AG04450 (cell line): ENCODE measurements at regions of chr6 and their contacts with region 1.

Region 1: GRCh38 chr6:89819336-89820130 is at the start of gene MDN1:
- DNase-seq: peak; percentile 82
- H3K4me3 ChIP-seq: peak within 1 kb of the TSS; percentile 98
- H3K27ac ChIP-seq: peak within 1 kb of the TSS; percentile 81
- H3K27me3 ChIP-seq: no peaks in the 10 kb centered on the region
- CTCF ChIP-seq: no peak
- polyA plus RNA-seq, gene MDN1: 14.6 and 15.8 TPM in 2 replicates

Region 2: DNA sequence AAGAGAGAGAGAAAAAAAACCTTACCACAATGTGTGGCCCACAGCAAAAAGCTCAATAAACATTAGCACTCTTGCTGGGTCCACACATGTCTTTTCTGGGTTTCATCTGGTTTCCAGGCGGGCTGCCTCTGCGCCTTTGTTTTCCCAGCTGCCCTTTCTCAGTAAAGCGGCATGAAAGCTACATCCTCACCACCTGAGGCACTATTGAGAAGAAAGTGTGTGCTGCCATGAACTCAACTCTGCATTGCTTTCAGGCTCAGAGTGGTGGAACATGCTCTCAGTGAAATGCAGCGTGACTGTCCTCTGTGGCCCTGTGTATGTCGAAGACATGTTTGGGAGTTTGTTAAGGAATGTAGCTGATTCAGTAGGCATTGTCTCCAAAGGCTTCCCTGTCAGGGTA is 283.3 kb before region 1 on chr6:
- CTCF ChIA-PET with region 1: no interaction called
- POLR2A ChIA-PET with region 1: no interaction called
- DNase-seq: no peak
- H3K4me3 ChIP-seq: no peak overlapping the region
- H3K27ac ChIP-seq: no peak overlapping the region
- H3K27me3 ChIP-seq: no peaks in the 10 kb centered on the region
- CTCF ChIP-seq: no peak

Region 3: DNA sequence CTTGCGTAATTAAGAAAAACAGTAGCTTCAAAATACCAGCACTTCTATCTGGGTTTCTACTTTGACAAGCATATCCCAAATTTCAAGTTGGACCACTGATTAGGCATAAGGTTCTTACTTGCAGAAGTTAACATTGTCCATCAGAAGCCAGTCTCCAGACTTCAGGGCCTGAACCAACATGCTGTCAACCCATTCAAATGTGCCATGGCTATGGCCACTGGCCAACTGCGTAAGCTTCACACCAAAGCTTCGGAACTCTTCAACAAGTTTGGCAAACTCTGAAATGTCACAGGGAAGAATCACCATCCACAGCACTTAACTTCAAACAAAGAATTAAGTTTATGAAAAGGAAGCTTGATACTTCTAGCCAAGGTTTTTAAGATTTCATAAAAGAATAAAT is 103.0 kb before region 1 on chr6:
- CTCF ChIA-PET with region 1: no interaction called
- POLR2A ChIA-PET with region 1: no interaction called
- DNase-seq: no peak
- H3K4me3 ChIP-seq: no peak overlapping the region
- H3K27ac ChIP-seq: no peak overlapping the region
- H3K27me3 ChIP-seq: no peaks in the 10 kb centered on the region
- CTCF ChIP-seq: no peak

Region 4: GRCh38 chr6:89829591-89830385 is 10.3 kb after region 1 on chr6 and contains the start of gene CASP8AP2:
- CTCF ChIA-PET with region 1: interaction called, 6 read pairs
- POLR2A ChIA-PET with region 1: interaction called, 14 read pairs
- DNase-seq: peak; percentile 97
- H3K4me3 ChIP-seq: peak within 1 kb of the TSS; percentile 96
- H3K27ac ChIP-seq: peak within 1 kb of the TSS; percentile 47
- H3K27me3 ChIP-seq: no peaks in the 10 kb centered on the region
- CTCF ChIP-seq: no peak
- polyA plus RNA-seq, gene CASP8AP2: 6.0 and 10.8 TPM in 2 replicates

Region 5: GRCh38 chr6:90080876-90081481 is 261.4 kb after region 1 on chr6:
- CTCF ChIA-PET with region 1: no interaction called
- POLR2A ChIA-PET with region 1: no interaction called
- DNase-seq: no peak
- H3K4me3 ChIP-seq: no peak overlapping the region
- H3K27ac ChIP-seq: no peak overlapping the region
- H3K27me3 ChIP-seq: no peaks in the 10 kb centered on the region
- CTCF ChIP-seq: no peak

Region 6: DNA sequence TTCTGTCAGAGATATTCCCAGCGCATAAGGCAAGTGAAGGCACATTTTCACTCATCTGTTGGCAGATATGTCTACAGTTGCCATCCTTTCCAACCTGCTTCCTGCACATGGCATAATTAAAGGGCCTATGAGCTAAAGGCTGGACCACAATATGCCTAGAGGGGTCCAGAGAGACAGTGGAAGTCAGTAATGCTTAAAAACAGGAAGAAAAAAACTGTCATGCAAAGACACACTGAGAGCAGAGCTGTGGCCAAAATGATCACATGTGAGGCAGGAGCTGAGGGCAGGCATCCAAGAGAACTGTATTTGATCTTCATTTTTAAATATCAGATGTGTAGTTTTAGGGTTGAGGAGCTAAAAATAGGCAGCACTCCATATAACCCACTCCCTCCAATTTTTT is 602.1 kb after region 1 on chr6:
- CTCF ChIA-PET with region 1: interaction called, 10 read pairs
- POLR2A ChIA-PET with region 1: no interaction called
- DNase-seq: no peak
- H3K4me3 ChIP-seq: no peak overlapping the region
- H3K27ac ChIP-seq: peak overlapping the region; percentile 12
- H3K27me3 ChIP-seq: peaks cover 11% of the 10 kb centered on the region
- CTCF ChIP-seq: no peak